Astrocyte of the cerebellum (primary cell): ENCODE measurements at regions of chr1 and their contacts with region 1.

Region 1: DNA sequence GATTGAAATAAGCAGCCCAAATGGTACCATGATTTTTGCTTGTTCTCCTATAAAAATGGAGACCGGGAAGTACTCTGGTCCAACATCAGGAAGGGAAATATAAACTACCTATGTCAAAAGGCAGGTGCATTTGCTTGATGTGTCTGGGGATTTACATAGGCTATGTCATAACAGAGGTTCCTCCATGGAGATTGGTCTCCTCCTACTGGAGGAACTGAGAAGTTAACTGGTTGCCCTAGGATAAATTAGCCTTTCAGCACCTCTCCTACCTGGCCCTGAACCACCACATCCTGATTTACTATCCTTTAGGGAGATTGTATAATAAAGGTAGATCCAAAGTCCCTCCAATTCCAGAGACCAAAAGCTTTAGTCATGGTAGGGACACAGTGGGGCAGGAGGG is 1109.3 kb upstream of the B3GALT2 start:
- DNase-seq: peak; percentile 26
- H3K4me3 ChIP-seq: no peak overlapping the region
- CTCF ChIP-seq: peak; percentile 73

Region 2: DNA sequence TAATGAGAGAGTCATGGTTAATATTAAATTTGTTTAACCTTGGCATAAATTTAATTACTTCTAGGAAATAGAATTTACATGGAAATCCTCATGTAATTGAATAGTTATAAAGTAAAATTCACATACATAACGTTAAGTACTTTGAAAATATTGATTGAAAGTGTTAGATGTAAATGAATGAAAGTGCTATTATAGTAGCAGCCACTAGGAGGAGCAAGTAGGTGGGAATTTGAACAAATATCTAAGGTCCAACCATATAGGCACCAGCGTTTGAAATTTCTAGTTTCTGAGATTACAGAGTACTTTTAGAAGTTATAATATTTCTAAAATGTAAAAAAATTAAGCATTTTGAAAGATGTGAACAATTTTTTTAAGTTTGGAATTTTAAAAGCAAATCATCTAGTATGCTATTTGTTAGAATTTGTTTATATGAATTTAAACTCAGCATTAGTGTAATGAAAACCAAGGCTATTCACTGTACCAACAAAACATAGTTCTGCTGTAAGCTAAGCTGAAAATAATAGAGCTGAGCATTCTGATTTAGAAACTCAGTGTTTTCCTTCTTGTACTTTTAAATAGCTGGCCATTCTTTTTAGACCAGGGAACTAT is 1112.6 kb before region 1 on chr1:
- in situ Hi-C with region 1: loop called (anchors 25 kb)
- DNase-seq: peak; percentile 50
- H3K4me3 ChIP-seq: no peak overlapping the region
- CTCF ChIP-seq: peak; percentile 67

Region 3: GRCh38 chr1:193537266-193538002 is 758.3 kb before region 1 on chr1:
- in situ Hi-C with region 1: no loop called
- DNase-seq: no peak
- H3K4me3 ChIP-seq: no peak overlapping the region
- CTCF ChIP-seq: no peak

Region 4: DNA sequence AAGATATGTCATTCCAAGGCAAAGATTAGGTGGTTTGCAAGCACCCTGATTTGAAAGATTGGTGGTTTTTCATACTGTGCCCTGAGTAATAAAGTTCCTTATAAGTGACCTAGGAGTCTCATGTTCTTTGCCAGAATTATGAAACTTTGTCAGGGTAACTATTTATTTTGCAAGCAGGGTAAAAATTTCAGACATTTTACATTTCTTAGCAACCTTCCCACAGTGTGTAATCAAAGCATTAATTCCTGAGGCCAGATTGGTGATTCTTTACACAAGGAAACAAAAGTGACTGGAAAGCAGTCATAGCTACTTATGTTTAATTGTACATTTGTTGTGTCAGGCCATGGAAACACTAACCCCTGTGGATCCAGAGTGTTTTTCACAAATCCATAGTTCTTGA is 111.3 kb before region 1 on chr1:
- in situ Hi-C with region 1: no loop called
- DNase-seq: no peak
- H3K4me3 ChIP-seq: no peak overlapping the region
- CTCF ChIP-seq: no peak

Region 5: GRCh38 chr1:194347200-194347599 is 51.5 kb after region 1 on chr1:
- in situ Hi-C with region 1: no loop called
- DNase-seq: no peak
- H3K4me3 ChIP-seq: no peak overlapping the region
- CTCF ChIP-seq: no peak

Region 6: GRCh38 chr1:194378517-194378916 is 82.8 kb after region 1 on chr1:
- in situ Hi-C with region 1: no loop called
- DNase-seq: no peak
- H3K4me3 ChIP-seq: no peak overlapping the region
- CTCF ChIP-seq: no peak